ENCODE measurements at regions of chr2 and their contacts with region 1.

Region 1: GRCh38 chr2:216236486-216236885 is 127.3 kb downstream of the XRCC5 start:
- DNase-seq: no peak
- H3K4me3 Mint-ChIP-seq: no peak overlapping the region
- H3K27ac Mint-ChIP-seq: no peak overlapping the region
- H3K4me1 Mint-ChIP-seq: peaks cover 11% of the 10 kb centered on the region
- H3K27me3 Mint-ChIP-seq: no peaks in the 10 kb centered on the region

Region 2: GRCh38 chr2:215294824-215295248 is 941.6 kb before region 1 on chr2:
- CTCF ChIA-PET with region 1: interaction called, 10 read pairs
- POLR2A ChIA-PET with region 1: no interaction called
- DNase-seq: no peak
- H3K4me3 Mint-ChIP-seq: no peak overlapping the region
- H3K27ac Mint-ChIP-seq: no peak overlapping the region
- H3K4me1 Mint-ChIP-seq: no peaks in the 10 kb centered on the region
- H3K27me3 Mint-ChIP-seq: no peaks in the 10 kb centered on the region

Region 3: DNA sequence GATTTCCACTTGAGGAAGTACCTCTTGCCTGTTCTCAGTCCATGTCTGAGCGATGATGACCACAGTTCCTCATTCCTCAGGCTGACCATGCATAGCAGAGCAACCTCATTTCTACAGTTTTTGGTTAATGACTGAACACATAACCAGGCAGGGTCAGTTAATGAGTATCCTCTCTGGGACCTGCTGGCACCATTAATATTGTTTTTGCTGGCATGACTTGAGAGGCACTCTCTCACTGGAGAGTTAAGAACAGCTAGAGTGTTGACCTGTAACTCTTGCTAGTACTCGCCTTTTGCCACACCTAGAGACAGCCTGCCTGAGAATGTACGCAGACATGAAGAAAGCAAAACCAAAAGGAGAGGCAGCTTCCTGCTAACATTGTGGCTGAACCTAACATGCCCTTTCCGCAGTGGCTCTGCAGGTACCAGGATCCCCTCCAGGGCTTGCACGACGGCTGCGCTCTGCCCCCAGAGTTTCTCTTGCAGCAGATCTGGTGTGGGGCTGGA is 178.7 kb before region 1 on chr2:
- CTCF ChIA-PET with region 1: no interaction called
- POLR2A ChIA-PET with region 1: no interaction called
- DNase-seq: peak; percentile 79
- H3K4me3 Mint-ChIP-seq: peak overlapping the region; percentile 67
- H3K27ac Mint-ChIP-seq: peak overlapping the region; percentile 94
- H3K4me1 Mint-ChIP-seq: peaks cover 35% of the 10 kb centered on the region
- H3K27me3 Mint-ChIP-seq: no peaks in the 10 kb centered on the region

Measured in activated CD4-positive, alpha-beta T cell treated with anti-CD3 and anti-CD28 coated beads, Interleukin-2, amount 10 ng/mL, durations not matched to agents 7 days and 5 days (primary cell).